ENCODE measurements at regions of chr14 and their contacts with region 1.

Region 1: DNA sequence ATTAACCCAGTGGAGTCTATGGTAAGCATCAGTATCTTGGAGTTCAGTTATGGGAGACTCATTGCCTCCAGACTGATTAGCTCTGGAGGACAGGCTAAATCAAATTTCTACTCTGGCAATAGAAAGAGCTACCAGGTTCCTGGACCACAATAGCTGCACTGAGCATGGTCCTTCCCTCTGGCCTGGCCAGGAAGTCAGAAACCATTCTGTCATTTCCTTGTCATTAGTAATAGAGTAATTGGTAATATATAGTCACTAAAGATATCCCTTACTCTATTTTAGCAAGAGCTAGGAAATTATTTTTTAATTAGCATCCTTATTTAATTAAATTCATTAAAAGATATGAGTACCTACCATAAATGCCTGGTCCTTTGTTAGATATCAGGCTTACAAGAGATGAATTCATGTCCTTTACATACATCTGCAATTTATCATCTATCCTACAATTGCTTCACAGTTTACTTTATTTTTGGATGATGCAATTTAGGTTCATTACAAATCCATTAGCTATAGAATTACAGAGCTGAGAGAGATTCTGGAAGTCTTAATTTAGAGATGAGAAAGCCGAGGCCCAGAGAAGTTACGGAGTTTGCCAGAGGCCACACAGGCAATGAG is 23.7 kb upstream of the TDRD9 start:
- DNase-seq: no peak
- ATAC-seq: no peak
- H3K4me3 Mint-ChIP-seq: no peak overlapping the region
- H3K27ac Mint-ChIP-seq: no peak overlapping the region
- H3K4me1 Mint-ChIP-seq: peaks cover 12% of the 10 kb centered on the region
- H3K27me3 Mint-ChIP-seq: no peaks in the 10 kb centered on the region

Region 2: DNA sequence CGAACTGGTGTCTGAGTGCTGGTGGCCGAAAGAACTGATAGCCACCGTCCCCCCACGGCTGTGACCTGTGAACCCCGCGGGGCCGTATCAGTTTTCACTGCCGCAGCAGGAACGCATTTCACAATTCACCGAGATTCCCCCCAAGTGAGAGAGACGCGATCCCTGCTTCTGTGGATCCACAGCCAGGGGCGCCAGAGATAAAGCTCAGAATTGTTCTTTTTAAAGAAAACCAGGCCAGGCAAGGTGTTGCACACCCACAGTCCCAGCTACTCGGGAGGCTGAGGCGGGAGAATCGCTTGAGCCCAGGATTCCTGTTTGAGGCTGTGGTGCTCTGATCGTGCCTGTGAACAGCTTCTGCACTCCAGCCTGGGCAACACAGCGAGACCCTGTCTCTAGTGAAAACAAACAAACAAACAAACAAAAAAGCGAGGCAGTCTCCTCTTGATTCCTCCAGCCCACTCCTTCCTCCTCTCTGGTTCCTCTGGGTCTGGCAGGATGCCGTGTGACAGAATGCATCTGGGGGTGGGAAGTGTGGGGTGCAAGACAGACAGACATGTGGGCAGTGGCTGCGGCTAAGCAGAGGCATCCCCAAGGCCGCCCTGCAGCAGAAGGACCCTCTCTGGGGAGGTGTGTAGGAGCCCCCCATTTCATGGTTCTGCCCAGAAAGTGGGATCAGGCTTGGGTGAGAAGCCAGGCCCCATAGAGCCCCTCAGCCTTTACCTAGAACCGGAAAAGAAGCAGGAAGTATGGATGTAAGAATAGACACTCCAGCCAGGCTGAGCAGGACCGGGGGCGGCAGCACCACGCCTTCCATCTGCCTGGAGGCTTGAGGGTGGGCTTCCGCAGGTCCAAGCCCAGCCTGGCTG is 18.1 kb before region 1 on chr14:
- CTCF ChIA-PET with region 1: interaction called, 12 read pairs
- POLR2A ChIA-PET with region 1: no interaction called
- intact Hi-C with region 1: no loop called
- DNase-seq: no peak
- ATAC-seq: no peak
- H3K4me3 Mint-ChIP-seq: no peak overlapping the region
- H3K27ac Mint-ChIP-seq: no peak overlapping the region
- H3K4me1 Mint-ChIP-seq: no peaks in the 10 kb centered on the region
- H3K27me3 Mint-ChIP-seq: no peaks in the 10 kb centered on the region

Region 3: GRCh38 chr14:104001003-104001402 is 96.4 kb after region 1 on chr14:
- CTCF ChIA-PET with region 1: no interaction called
- POLR2A ChIA-PET with region 1: no interaction called
- intact Hi-C with region 1: loop called in 1 of 2 experiments (anchors 5 kb)
- DNase-seq: peak; percentile 41
- ATAC-seq: peak; percentile 65
- H3K4me3 Mint-ChIP-seq: no peak overlapping the region
- H3K27ac Mint-ChIP-seq: no peak overlapping the region
- H3K4me1 Mint-ChIP-seq: no peaks in the 10 kb centered on the region
- H3K27me3 Mint-ChIP-seq: peaks cover 4% of the 10 kb centered on the region

Region 4: GRCh38 chr14:104196461-104197140 is 292.0 kb after region 1 on chr14:
- CTCF ChIA-PET with region 1: no interaction called
- POLR2A ChIA-PET with region 1: no interaction called
- intact Hi-C with region 1: no loop called
- DNase-seq: no peak
- ATAC-seq: no peak
- H3K4me3 Mint-ChIP-seq: no peak overlapping the region
- H3K27ac Mint-ChIP-seq: no peak overlapping the region
- H3K4me1 Mint-ChIP-seq: no peaks in the 10 kb centered on the region
- H3K27me3 Mint-ChIP-seq: peaks cover 3% of the 10 kb centered on the region

Region 5: DNA sequence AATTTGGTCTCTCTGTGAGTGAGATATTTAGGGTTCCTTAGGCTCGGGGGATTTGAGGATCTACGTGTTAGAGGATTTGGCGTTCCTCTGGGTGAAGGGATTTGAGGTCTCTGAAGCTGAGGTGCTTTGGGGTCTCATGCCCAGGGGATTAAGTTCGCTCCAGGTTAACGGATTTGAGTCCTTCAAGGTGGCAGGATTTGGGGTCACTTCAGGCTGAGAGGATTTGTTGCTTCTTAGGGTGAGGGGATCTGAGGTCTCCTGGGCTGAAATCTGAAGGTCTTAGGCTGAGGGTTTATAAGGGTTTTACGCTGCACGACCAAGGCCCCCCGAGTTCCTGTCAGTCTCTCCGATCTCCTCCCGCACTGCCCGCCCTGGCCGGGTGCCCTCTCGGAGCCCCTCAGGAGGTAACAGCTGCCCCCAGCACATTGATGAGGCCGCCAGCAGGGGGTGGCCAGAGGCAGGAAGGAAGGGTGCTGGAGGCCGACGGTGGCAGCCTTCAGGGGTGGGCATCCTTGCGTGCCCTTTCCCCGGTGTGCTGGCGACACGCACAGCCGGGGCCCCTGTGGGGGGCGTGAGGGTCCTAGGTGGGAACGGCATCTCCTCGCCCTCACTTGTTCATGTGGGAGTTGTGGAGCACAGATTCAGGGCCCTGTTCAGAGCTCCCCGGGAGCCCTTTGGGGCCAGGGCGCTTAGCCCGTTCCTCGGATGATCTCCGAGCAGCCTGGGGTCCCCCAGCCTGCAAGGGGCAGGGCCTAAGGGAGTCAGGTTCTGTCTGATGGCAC is 974.8 kb after region 1 on chr14:
- CTCF ChIA-PET with region 1: no interaction called
- POLR2A ChIA-PET with region 1: no interaction called
- intact Hi-C with region 1: no loop called
- DNase-seq: no peak
- ATAC-seq: no peak
- H3K4me3 Mint-ChIP-seq: no peak overlapping the region
- H3K27ac Mint-ChIP-seq: no peak overlapping the region
- H3K4me1 Mint-ChIP-seq: no peaks in the 10 kb centered on the region
- H3K27me3 Mint-ChIP-seq: no peaks in the 10 kb centered on the region